Common myeloid progenitor, CD34-positive (primary cell): ENCODE measurements at regions of chr12 and their contacts with region 1.

Region 1: GRCh38 chr12:25436203-25437030 is 116.7 kb downstream of the LMNTD1 start:
- DNase-seq: peak; percentile 79 to 90 (median 87)
- H3K4me3 ChIP-seq: peak overlapping the region in 5 of 7 experiments; percentile 21 to 69 (median 45)
- H3K27ac ChIP-seq: no peak overlapping the region
- H3K4me1 ChIP-seq: peaks cover 0 to 3% (median 2%) of the 10 kb centered on the region in 4 experiments
- H3K27me3 ChIP-seq: no peaks in the 10 kb centered on the region

Region 2: GRCh38 chr12:25459541-25459951 is 23.1 kb after region 1 on chr12:
- CTCF ChIA-PET with region 1: no interaction called
- POLR2A ChIA-PET with region 1: no interaction called
- DNase-seq: peak; percentile 14 to 58 (median 43)
- H3K4me3 ChIP-seq: no peak overlapping the region
- H3K27ac ChIP-seq: no peak overlapping the region
- H3K4me1 ChIP-seq: no peaks in the 10 kb centered on the region
- H3K27me3 ChIP-seq: no peaks in the 10 kb centered on the region

Region 3: DNA sequence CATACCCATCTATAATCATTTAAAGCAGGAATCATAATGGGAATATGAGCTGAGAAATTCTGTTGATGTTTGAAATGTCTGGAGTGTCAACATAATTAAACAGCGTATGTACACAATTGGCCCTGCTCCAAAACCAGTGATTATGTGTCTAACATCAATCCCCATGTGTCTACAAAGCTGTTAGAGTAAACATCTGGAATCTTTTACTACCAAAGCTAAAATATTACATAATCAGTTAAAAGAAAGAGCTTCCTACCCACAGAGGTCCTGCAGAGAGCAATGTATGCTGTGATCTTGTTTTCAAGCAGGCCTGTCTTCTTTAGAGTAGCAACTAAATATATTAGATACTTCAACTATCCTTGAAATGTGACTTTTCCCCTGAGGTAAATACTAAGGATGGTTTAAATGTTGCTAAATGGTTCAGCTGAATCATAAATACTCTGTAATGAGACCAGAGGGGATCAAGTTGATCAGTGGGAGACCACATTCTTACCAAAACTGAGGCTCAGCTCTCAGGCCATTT is 596.4 kb after region 1 on chr12:
- CTCF ChIA-PET with region 1: interaction called, 45 read pairs
- POLR2A ChIA-PET with region 1: no interaction called
- DNase-seq: no peak
- H3K4me3 ChIP-seq: no peak overlapping the region
- H3K27ac ChIP-seq: no peak overlapping the region
- H3K4me1 ChIP-seq: no peaks in the 10 kb centered on the region
- H3K27me3 ChIP-seq: no peaks in the 10 kb centered on the region